ENCODE measurements at regions of chr18 and their contacts with region 1.

Region 1: GRCh38 chr18:741931-742512 is 29.6 kb upstream of the ENOSF1 start:
- DNase-seq: no peak
- ATAC-seq: peak; percentile 52
- H3K4me3 Mint-ChIP-seq: no peak overlapping the region
- H3K27ac Mint-ChIP-seq: no peak overlapping the region
- H3K4me1 Mint-ChIP-seq: no peaks in the 10 kb centered on the region
- H3K27me3 Mint-ChIP-seq: no peaks in the 10 kb centered on the region
- CTCF ChIP-seq: no peak

Region 2: DNA sequence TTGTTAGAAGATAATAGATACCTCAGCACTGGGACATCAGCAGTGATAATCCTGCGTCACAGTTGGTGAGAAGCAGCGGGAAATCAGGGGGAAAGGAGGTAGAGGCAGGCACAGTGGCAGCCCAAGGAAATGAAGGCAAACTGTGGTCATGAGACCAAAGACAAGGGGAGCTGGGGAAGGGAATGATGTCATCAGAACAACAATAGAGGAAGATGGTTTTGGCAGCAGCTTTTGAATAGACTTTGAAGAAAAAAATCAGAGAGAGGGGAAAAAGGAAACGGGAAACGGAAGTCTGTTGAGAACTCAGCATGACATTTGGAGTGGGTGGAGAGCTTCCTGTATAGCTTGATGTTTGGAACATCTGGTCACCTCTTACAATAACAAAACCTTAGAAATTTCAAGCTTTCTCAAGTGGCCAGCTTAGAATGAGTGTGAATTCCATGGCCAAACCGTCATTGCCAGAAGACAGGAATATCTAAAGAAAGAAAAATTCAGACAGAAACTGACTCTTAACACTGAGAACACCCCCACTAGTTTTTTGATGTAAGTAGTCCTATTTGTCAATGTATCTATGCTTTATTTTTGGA is 88.4 kb after region 1 on chr18:
- CTCF ChIA-PET with region 1: interaction called, 16 read pairs
- POLR2A ChIA-PET with region 1: no interaction called
- intact Hi-C with region 1: loop called (anchors 1 kb)
- DNase-seq: no peak
- ATAC-seq: no peak
- H3K4me3 Mint-ChIP-seq: peak overlapping the region; percentile 6
- H3K27ac Mint-ChIP-seq: no peak overlapping the region
- H3K4me1 Mint-ChIP-seq: peaks cover 10% of the 10 kb centered on the region
- H3K27me3 Mint-ChIP-seq: peaks cover 19% of the 10 kb centered on the region
- CTCF ChIP-seq: no peak

Region 3: DNA sequence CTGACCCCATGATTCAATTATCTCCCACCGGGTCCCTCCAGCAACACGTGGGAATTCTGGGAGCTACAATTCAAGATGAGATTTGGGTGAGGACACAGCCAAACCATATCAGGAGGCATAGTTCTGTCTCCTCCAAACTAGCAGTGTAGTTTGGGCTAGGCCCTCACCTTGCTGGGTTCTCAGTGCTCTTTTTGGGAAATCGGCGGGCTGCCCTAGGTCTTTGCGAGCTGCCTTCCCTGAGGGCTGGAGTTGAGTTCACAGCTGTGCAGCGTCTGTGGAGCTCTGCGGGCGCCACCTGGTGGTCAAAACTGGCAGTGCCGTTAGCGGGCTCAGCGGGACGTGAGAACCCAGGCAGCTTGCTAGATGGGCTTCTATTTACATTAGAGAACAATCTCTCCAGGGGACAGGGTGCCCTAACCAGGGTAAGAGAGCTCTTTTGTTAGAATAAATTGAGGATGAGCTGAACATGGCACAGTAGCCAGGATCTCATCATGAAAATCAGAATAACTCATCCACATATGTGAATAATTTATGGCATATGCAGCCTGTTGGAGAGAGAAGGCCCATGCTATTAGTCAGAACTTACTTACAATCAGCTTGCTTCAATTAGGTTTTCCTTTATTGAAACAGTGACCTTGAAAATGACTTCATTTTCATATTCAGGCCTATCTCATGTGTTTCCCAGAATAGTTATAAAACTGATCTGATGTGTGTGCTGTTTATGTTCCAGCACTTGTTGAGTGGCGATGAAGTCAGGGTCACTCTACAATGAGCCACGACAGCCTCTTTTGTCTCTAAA is 97.4 kb after region 1 on chr18:
- CTCF ChIA-PET with region 1: interaction called, 14 read pairs
- POLR2A ChIA-PET with region 1: no interaction called
- intact Hi-C with region 1: loop called (anchors 2 kb)
- DNase-seq: peak; percentile 70
- ATAC-seq: peak; percentile 87
- H3K4me3 Mint-ChIP-seq: no peak overlapping the region
- H3K27ac Mint-ChIP-seq: no peak overlapping the region
- H3K4me1 Mint-ChIP-seq: no peaks in the 10 kb centered on the region
- H3K27me3 Mint-ChIP-seq: peaks cover 9% of the 10 kb centered on the region
- CTCF ChIP-seq: peak; percentile 31

Measured in activated B cell treated with CpG ODN at 0.5 μM for 24 hours (primary cell).